Adrenal gland (tissue), 19 donors: ENCODE measurements at regions of chr1 and their contacts with region 1.

Region 1: DNA sequence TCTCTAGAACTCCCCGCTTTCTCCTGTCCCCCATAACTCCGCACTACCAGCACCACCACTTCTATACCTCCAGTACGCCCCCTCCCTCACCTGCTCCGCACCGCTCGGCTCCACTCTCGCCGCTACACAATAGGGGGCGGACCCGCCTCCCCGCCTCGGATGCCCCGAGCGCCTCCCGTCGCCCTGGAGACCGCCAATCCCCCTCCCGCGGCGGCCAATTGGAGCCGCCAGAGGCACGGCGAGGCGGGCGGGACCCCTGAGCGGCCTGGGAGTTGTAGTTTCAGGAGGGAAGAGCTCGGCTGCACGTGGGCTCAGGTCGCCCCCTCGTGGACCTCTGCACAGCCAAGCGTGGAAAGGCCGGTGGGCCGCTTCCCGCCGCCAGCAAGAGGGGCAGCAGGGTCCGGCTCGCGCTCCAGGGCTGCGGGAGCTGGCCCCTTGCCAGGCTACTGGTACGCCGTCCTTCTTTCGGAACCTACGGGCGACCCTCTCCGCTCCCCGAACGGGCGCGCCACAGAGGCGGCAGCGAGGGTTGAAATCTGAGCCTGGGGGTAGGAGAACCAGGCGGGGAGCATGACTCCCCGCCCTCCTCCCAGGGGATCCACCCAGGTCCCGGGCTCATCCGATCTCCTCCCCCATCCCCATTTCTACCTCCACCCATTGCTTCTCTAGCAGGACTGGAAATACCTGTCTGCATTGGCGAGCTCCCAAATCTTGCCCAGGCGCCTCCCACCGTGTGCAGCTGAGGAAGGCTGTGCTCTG is at the start of gene IGSF9:
- DNase-seq: peak in 6 of 7 donors; percentile 48 to 75 (median 52)
- H3K4me3 ChIP-seq: peak within 1 kb of the TSS in 1 of 4 donors; percentile 49
- H3K27ac ChIP-seq: no peak within 1 kb of the TSS
- H3K4me1 ChIP-seq: peaks cover 0 to 10% of the 10 kb centered on the region in 2 donors
- H3K27me3 ChIP-seq: peaks cover 19% of the 10 kb centered on the region
- CTCF ChIP-seq: peak in 3 of 6 experiments; percentile 10 to 44 (median 25)
- POLR2A ChIP-seq: no peak
- total RNA-seq, gene IGSF9: 0.14 to 0.32 (median 0.22) TPM in 4 of 9 donors, not detected in the others

Region 2: GRCh38 chr1:159664247-159664646 is 281.4 kb before region 1 on chr1:
- intact Hi-C with region 1: no loop called
- DNase-seq: no peak
- H3K4me3 ChIP-seq: no peak overlapping the region
- H3K27ac ChIP-seq: no peak overlapping the region
- H3K4me1 ChIP-seq: no peaks in the 10 kb centered on the region
- H3K27me3 ChIP-seq: no peaks in the 10 kb centered on the region
- CTCF ChIP-seq: no peak
- POLR2A ChIP-seq: no peak

Region 3: GRCh38 chr1:159752135-159752580 is 193.5 kb before region 1 on chr1:
- intact Hi-C with region 1: no loop called
- DNase-seq: peak; percentile 85 to 98 (median 96)
- H3K4me3 ChIP-seq: no peak overlapping the region
- H3K27ac ChIP-seq: peak overlapping the region in 4 of 5 donors; percentile 14 to 81 (median 56)
- H3K4me1 ChIP-seq: peaks cover 0 to 22% of the 10 kb centered on the region in 2 donors
- H3K27me3 ChIP-seq: no peaks in the 10 kb centered on the region
- CTCF ChIP-seq: peak in 1 of 6 experiments; percentile 9
- POLR2A ChIP-seq: no peak

Region 4: GRCh38 chr1:160098852-160099561 is 153.3 kb after region 1 on chr1:
- intact Hi-C with region 1: loop called in 1 of 2 experiments (anchors 10 kb)
- DNase-seq: peak; percentile 98 to 99 (median 98)
- H3K4me3 ChIP-seq: peak overlapping the region in 3 of 4 donors; percentile 27 to 85 (median 54)
- H3K27ac ChIP-seq: peak overlapping the region; percentile 55 to 90 (median 86)
- H3K4me1 ChIP-seq: peaks cover 10 to 18% of the 10 kb centered on the region in 2 donors
- H3K27me3 ChIP-seq: no peaks in the 10 kb centered on the region
- CTCF ChIP-seq: no peak
- POLR2A ChIP-seq: peak in 1 of 2 donors; percentile 71